ENCODE measurements at regions of chr10 and their contacts with region 1.

Region 1: DNA sequence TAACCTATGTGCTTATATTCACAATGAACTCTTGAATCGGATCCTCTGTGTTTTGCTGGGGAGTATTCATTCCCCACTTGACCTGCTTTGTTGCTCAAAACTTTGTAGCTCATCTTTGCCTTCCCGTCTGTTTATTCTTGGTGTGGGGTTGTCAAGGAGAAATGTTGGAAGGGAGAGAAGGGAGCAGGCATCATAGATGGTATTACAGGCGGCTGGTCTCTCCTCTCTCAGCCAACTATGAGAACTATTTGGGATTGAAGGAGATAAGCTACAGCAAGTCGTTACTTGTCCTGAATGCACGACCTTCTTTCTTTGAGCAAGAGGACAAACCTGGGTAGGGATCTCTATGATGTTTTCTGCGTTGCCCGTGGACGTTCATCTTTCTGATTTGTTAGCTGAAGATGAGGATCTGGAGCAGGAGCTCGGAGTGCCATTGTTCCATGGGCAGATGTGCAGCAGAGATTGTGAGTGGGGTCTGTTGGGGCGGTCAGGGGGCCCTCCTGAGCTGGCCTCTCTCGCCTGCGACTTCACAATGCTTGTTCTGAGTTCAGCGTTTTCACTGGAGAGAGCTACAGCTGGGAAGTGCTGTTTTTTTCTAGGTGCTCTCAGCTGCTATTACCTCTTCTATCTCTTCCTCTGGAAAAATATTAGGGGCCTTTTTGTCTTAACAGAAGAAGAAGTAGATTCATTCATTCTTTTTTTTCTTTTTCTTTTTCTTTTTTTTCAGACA is 126.9 kb upstream of the KLF6 start:
- DNase-seq: no peak
- ATAC-seq: peak; percentile 88

Region 2: DNA sequence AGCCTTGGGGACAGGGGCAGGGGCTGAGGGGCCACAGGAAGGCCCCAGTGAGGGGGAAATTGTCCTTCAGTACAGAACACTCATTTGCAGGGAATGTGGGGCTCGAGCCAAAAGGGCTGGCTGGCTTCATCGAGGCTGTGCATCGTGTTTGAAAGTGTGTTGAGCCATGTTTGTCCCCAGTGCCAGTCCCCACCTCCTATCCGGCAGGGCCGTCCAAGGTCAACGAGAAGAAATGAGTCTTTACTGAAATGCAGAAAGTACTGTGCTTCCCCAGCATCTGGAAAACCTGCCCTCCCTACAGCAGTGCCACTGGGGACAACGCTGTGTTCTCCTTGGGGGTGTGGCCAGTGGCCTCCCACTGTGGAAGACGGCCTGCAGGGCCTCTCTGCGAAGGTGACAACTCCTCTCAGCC is 341.0 kb before region 1 on chr10:
- intact Hi-C with region 1: no loop called
- DNase-seq: no peak
- ATAC-seq: peak; percentile 41

Region 3: DNA sequence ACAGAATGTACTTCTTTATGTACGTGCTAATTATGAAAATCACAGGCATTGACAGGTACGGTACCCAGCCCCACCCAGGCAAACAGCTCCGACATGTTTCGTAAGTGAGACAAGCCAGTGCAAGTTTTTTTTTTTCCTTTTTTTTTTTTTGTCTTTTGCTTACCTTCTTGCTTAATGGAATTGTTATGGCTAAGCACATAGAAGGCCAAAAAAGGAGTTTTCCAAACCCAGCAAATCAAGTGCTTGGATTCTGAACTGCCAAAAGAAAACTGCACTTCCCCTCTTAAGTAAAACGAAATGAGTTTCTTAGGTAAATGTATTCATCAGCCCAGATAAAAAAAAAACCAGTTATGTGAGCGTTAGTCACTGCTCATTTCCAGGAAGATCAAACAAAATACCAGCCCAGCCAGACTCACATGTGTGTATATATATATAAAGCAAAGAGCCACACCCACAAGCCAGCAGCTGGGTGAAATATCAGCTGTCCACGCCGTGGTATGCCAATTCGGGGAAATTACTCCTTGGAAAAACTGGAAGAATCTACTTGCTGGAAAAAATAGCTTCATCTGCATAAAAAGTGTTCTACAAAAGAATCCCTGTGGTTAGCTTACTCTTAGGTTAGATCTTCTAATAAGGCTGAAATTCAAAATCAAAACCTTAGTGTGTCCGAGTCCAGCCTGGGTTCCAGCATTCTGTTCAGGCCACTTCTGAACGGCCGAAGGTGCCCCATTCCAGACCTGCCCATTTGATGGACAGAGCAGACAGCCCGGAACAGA is 134.9 kb before region 1 on chr10:
- intact Hi-C with region 1: no loop called
- DNase-seq: no peak
- ATAC-seq: peak; percentile 15

Region 4: DNA sequence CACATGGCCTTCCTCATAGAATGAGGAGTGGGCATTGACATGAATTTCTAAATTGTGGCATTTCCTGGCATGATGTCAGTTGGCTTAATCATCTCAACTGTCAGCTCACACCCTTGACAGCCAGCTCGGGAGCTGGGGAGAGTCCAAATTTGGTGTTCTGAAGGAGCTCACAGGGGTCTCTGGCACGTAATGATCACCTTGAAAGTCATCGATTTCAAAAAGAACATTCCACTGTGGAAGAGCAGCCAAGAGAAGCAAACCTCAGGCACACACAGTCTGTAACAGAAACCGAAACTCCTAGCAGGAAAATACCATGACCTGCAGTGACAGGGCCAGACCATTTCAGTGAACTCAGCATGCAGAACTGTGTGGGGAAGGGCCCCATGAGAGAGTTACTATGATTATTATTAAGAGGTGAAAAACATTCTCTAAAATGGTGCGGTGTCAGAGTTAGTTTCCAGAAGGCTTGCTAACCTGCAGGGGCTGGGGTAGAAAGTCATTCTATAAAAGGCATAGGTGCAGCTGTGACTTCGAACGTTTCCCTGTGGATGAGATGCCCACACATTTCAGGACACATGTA is 100.5 kb before region 1 on chr10:
- intact Hi-C with region 1: loop called (anchors 2 kb)
- DNase-seq: no peak
- ATAC-seq: peak; percentile 76

Region 5: GRCh38 chr10:3825244-3825643 is 86.6 kb before region 1 on chr10:
- intact Hi-C with region 1: no loop called
- DNase-seq: no peak
- ATAC-seq: no peak

Region 6: DNA sequence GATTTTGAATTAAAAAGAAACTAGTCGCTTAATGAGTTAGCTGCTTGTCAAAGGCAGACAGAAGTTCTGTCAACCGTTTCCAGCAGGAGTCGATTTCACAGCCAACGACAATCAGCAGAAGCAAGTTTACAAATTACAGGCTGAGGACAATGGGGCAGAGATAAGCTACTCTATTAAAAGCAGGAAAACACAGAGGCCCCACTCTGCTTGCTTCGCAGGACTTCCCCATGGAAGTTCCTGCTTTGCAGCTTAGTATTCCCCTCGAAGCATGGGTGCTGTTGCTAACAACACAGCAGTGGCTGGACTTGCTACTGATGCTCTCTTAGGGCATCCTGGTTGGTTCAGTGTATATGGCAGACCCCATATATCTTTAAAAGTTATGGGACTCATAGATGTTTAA is 76.1 kb before region 1 on chr10:
- intact Hi-C with region 1: loop called (anchors 5 kb)
- DNase-seq: no peak
- ATAC-seq: peak; percentile 80

Region 7: DNA sequence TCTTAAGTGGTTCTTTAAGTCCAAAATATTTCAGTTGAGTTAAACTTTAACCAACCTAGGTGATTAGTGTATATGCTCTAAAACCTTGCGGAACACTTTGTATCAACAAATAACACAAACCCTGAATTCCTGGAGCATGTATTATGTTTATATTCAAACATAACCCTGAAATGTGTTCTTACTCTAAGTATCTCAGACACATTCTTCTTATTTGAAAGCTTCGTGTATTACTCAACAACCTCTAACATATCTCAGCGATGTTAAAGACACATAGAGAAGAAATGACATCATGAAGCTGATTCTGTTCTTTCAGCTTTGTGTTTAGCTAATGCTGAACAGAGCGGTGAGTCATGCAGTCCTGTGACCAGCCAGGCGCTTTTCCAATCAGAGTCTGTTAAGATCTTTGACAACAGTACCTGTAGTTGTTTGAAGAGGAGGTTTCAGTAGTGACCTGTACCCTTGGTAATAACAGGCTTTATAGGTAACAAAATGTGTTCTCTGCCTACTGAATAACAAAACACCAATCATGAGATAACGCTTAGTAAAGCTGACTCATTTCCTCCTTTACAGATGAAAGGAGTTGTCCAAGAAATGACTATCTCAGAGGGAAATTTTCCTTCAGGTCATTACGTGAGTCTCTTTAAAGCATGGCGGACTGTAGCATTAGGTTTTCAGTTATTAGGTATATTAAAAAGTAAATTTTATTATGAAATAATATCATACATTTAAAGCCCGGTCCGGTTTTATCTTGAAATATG is 59.6 kb before region 1 on chr10:
- intact Hi-C with region 1: loop called (anchors 5 kb)
- DNase-seq: no peak
- ATAC-seq: peak; percentile 83

Region 8: DNA sequence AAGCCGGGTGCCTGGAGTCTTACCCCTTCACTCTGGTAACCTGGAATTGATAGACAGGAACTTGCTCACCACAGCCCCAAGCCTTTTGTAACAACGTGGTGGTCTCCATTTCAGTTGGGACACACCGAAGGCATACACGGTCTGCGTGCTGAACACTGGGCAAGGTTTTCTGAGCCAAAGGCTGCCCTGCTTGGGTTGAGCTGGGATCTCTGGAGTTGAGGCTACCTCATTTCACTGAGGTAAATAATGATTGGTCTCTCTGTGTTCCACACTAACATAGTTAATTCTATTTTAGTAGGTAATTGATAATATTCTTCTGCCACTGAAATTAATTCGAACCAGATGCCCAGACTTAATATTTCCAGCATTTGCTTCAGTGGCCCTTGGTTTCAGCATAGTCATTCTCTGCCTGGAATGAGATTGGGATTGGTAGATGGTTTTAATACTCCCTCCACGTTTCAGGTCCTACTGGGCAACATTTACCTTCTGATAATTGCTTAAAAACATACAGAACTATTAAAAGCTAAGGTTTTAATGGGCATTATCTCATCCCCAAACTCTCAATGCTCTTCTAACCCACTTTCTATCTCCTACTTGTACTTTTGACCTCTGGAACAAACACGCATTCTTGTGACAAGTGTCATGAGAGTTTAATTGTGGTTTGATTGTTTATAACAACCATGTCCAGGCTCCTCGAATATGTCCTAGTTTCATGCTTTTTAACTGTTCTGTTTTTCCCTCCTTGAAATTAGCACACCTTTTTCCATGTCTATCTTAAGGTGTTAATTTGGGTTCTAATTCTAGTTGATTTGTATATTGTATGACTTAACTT is 75.5 kb after region 1 on chr10:
- intact Hi-C with region 1: loop called (anchors 5 kb)
- DNase-seq: no peak
- ATAC-seq: peak; percentile 39

Region 9: DNA sequence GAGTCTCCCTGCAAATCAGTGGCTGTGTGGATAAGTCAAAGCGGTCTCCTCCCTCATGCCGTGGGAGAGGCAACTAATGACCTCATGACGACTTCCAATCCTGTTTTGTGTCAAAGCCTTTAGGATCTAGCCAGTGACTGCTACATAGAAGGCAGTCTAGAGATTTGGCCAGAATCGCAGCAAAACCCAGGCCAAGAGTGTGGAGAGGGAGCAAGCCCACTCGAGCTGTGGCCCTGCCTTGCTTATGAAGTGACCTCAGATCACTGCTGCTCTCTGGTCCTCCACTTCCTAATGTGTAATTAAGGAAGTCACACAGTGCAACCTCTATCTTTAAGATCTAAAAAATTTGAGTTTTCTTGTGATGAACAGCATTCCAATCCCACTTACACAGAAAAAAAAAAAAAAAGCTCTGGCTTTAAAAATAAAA is 169.8 kb after region 1 on chr10:
- intact Hi-C with region 1: loop called (anchors 5 kb)
- DNase-seq: no peak
- ATAC-seq: peak; percentile 71

Measured in Right ventricle myocardium inferior (tissue), 1 donor.